Cardiac septum (tissue), 1 donor: ENCODE measurements at regions of chr3 and their contacts with region 1.

Region 1: DNA sequence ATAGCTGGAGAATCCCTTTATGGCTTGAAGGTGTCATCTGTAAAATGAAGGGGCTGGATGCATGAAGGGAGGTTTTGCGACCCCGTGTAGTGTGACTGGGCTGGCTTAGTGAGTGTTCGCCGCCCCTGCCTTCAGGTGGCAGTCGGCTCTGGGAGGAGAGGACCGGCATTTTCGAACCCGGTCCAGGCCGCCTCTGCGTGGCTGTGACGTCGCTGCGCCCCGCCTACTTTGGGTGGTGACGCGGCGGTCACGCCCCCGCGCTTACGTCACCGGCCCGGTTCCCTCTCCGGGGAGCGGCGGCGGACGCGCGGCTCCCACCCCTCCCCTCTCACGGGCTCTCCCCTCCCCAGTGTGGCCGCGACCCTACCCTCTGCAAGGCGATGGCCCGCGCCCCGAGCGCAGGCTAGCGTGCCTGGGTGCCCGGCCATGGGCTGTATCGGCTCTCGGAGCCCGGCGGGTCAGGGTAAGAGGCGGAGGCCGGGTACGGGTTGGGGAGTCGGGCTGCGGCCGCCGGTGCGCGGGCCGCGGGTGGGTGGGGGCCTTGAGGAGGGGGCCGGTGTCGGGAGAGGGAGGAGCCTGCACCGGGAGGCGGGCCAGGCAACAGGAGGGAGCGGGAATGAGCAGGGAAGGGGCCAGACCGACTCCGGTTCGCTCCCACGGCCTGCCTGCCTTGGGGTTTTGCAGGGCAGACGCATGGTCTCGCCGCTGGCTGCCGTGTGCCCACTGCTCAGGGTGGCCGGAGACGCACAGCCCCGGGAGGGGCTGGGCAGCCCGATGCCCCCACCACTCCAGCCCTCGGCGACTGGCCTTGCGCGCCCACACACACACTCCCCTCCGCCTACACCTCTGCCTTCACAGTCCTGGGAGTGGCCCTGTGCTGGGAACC is 1.5 kb upstream of the FAM131A start:
- DNase-seq: peak; percentile 95

Region 2: DNA sequence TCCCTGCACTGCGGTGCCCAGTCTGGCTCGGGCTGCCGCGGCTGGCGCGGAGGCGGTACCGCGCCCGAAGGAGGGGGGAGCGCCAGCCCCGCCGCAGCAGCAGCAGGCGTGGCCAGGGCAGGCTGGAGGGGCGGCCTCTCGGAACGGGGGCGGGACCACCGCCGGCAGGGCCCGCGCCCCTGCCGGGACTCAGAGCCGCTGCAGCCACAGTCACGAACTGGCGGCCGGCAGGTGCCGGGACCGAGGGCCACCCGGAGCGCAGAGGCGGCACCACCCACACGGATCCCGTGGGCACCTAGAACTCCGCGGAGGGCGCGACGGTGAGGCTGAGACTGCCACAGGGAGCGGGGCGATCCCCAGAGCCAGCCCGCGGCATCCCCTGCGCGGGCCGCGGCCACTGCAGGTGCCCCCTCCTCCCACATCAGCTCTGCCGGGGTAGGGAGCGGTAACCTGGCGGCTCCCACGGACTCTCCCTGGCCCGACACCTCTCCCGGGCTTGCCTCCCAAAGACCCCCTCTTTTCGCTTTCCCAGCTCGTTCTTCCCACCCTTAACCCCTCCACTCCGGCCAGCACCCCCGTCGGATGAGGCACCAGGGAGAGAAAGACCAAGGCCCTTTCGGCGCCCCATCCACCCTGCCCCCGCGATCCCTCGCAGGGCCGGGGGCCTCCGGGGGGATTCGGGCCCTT is 106.4 kb before region 1 on chr3 and contains the start of gene VWA5B2:
- intact Hi-C with region 1: no loop called
- DNase-seq: no peak
- total RNA-seq, gene VWA5B2: not detected

Region 3: DNA sequence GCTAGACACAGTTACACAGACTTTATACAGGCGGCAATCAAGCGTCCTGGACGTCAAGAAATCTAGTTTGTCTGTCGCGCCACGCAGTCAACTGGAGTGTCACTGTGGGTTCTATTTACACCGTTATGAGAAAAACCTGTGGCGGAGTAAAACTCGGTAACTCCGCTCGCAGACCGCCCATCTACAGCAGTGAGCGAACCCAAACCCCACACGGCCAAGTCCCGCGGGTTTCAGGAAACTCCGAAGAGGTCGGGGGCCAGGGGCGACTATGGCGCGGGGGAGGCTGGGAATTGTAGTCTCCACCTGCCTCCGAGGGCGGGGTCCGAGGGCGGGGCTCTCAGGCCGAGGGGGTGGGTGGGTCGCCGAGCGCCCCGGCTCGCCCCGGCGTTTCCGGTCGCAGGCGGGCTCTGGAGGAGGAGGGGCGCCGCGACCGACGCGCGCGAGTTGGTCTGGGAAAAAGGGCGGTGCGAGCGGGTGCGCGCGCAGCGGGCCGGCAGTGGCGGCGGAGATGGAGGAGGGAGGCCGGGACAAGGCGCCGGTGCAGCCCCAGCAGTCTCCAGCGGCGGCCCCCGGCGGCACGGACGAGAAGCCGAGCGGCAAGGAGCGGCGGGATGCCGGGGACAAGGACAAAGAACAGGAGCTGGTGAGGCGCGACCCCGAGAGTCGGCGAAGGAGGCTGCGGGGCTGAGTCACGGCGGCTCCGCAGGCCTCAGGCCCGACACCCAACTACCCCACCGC is 37.0 kb before region 1 on chr3 and contains the start of gene PSMD2:
- intact Hi-C with region 1: loop called (anchors 1 kb)
- DNase-seq: peak; percentile 98
- total RNA-seq, gene PSMD2: 217 TPM

Region 4: DNA sequence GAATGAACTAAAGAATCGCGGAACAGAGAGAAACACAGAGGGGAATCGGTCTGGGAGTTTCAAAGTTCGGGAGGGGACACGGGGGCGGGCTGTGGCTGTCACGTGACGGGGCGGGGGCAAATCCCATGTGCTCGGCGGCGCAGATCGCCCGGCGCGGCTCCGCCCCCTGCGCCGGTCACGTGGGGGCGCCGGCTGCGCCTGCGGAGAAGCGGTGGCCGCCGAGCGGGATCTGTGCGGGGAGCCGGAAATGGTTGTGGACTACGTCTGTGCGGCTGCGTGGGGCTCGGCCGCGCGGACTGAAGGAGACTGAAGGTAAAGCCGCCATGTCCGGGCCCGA is 21.6 kb before region 1 on chr3 and contains the start of gene EIF4G1:
- intact Hi-C with region 1: loop called (anchors 2 kb)
- DNase-seq: peak; percentile 97
- total RNA-seq, gene EIF4G1: 284 TPM

Region 5: DNA sequence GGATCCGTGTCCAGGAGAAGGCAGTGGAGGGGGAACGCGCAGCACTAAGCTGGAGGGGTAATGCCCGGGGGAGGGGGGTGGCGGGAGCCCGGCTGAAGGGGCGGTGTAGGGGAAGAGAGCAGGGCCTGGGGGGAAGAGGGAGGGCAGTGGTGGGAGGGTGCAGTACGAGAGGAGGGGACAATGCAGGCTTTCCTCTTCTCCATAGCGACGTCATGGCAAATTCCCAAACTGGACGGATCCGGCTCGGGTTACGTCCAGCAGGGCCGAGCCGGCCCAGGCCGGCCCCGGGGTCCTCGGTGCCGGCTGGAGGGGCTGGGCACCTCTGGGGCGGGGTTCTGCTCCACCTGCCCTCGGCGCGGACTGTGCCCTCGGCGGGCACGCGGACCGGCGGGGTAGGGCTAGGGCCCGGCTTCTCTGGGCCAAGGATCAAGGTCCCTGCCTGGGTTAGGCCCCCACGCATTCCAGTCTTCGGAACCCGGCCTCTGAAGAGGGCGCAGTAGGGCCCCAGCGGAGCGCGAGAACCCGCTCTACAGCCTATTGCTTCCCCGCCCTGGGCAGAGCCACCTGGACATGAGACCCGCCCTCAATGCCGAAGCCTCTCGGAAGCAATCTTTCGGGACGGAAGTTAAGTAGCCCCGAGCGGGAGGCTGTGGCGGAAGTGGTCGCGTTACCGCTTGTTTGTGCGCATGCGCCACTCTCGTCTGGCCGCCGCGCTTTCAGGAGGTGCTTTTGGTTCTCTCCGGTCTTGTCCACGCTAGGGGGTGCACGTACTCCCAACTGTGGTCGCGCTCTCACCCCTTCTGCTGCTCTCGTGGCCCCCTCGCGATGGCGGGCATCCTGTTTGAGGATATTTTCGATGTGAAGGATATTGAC is 27.0 kb after region 1 on chr3:
- intact Hi-C with region 1: loop called (anchors 2 kb)
- DNase-seq: peak; percentile 97

Region 6: DNA sequence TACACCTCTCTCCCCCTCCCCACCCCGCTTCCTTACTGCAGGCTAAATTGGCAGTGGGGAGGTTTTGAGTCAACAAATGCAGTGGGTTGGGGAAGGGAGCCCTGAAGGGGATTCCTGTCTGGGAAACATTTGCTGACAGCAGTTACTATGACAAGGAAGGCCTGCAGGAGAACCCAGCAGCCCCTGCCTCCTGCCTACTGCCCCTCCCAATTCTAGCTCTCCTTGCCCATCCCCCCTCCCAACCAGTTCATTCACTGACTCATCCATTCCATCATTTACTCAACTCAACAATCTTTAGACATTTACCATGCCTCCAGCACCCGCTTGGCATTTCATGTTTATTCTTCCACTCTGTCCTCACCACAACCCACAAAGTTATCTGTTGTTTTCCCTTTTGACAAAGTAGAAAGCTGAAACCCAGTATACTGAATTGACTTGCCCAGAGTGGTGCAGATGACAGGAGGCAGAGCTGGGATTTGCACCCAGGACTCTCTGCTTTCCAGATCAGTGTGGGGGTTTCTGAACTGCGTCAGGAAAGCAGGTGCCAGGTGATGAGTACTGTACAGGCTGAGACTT is 300.9 kb after region 1 on chr3:
- intact Hi-C with region 1: no loop called
- DNase-seq: peak; percentile 39